Activated CD8-positive, alpha-beta T cell treated with anti-CD3 and anti-CD28 coated beads for 36 hours (primary cell): ENCODE measurements at regions of chr3 and their contacts with region 1.

Region 1: DNA sequence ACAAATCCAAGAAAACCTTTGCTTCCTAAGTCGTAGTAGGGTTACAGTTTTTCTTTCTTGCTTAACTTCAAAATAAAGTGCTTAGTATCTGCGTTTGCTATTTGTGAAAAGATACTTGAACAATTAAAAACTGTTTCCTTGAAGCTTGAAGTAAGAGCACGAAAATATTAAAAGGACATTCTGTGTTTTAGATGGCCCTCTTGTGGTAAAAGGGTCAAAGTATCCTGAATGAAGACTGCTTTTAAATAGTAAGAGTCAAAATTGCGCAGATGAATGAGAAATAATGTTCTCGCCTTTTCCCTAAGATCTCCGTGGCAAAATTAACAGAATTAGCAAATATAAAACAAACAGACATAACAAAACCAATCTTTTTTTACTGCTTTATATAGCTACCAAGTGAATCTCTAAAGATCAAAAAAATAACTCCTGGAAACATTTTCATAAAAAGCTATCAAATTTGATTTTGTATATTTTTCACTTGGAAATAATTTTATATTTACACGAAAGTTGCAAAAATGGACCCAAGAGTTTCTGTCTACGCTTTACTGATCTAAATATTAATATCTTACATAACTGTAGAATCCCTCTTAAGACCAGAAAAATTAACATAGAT is 175.4 kb downstream of the MBNL1 start:
- DNase-seq: no peak
- ATAC-seq: peak; percentile 41
- H3K4me3 Mint-ChIP-seq: no peak overlapping the region
- H3K27ac Mint-ChIP-seq: peak overlapping the region; percentile 43
- H3K4me1 Mint-ChIP-seq: peaks cover 69% of the 10 kb centered on the region
- H3K27me3 Mint-ChIP-seq: no peaks in the 10 kb centered on the region
- CTCF ChIP-seq: peak; percentile 70

Region 2: GRCh38 chr3:152183473-152183872 is 260.7 kb before region 1 on chr3:
- CTCF ChIA-PET with region 1: interaction called, 34 read pairs
- POLR2A ChIA-PET with region 1: no interaction called
- intact Hi-C with region 1: loop called (anchors 5 kb)
- DNase-seq: peak; percentile 82
- ATAC-seq: peak; percentile 91
- H3K4me3 Mint-ChIP-seq: peak overlapping the region; percentile 32
- H3K27ac Mint-ChIP-seq: peak overlapping the region; percentile 72
- H3K4me1 Mint-ChIP-seq: peaks cover 57% of the 10 kb centered on the region
- H3K27me3 Mint-ChIP-seq: no peaks in the 10 kb centered on the region
- CTCF ChIP-seq: peak; percentile 71

Region 3: GRCh38 chr3:152298393-152299242 is 145.5 kb before region 1 on chr3:
- CTCF ChIA-PET with region 1: interaction called, 3 read pairs
- POLR2A ChIA-PET with region 1: interaction called, 3 read pairs
- intact Hi-C with region 1: loop called (anchors 10 kb)
- DNase-seq: peak; percentile 80
- ATAC-seq: peak; percentile 87
- H3K4me3 Mint-ChIP-seq: peak overlapping the region; percentile 73
- H3K27ac Mint-ChIP-seq: peak overlapping the region; percentile 96
- H3K4me1 Mint-ChIP-seq: peaks cover 74% of the 10 kb centered on the region
- H3K27me3 Mint-ChIP-seq: no peaks in the 10 kb centered on the region
- CTCF ChIP-seq: no peak

Region 4: DNA sequence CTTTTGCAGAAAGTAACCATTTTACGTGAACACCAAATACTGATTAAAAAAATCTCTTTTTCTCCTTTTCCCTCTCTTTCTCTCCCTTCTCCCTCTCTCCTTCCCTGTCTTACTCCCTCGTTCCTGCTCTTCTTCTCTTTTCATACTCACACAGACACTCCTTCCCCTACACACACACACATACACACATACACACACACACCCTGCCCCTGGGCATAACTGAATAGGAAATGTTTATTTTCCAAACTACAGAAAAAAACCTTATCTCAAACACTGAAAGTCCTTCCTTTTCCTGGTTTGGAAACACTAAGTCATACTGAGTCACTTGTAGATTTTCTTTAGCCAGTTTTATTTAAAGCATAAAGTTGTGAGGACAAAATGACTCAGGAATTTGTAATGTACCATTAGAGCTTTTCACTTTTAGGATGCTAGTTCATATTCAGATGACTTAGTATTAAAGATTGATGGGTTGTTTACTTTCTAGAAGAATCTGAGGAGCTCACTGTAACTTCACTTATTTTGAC is 113.1 kb before region 1 on chr3:
- CTCF ChIA-PET with region 1: interaction called, 10 read pairs
- POLR2A ChIA-PET with region 1: interaction called, 3 read pairs
- intact Hi-C with region 1: no loop called
- DNase-seq: no peak
- ATAC-seq: peak; percentile 37
- H3K4me3 Mint-ChIP-seq: peak overlapping the region; percentile 31
- H3K27ac Mint-ChIP-seq: peak overlapping the region; percentile 87
- H3K4me1 Mint-ChIP-seq: peaks cover 88% of the 10 kb centered on the region
- H3K27me3 Mint-ChIP-seq: no peaks in the 10 kb centered on the region
- CTCF ChIP-seq: no peak

Region 5: GRCh38 chr3:152374262-152374990 is 69.7 kb before region 1 on chr3:
- CTCF ChIA-PET with region 1: interaction called, 15 read pairs
- POLR2A ChIA-PET with region 1: no interaction called
- intact Hi-C with region 1: no loop called
- DNase-seq: no peak
- ATAC-seq: no peak
- H3K4me3 Mint-ChIP-seq: no peak overlapping the region
- H3K27ac Mint-ChIP-seq: peak overlapping the region; percentile 44
- H3K4me1 Mint-ChIP-seq: peaks cover 82% of the 10 kb centered on the region
- H3K27me3 Mint-ChIP-seq: no peaks in the 10 kb centered on the region
- CTCF ChIP-seq: no peak

Region 6: GRCh38 chr3:152458376-152459117 is 14.4 kb after region 1 on chr3:
- CTCF ChIA-PET with region 1: interaction called, 11 read pairs
- POLR2A ChIA-PET with region 1: no interaction called
- intact Hi-C with region 1: no loop called
- DNase-seq: peak; percentile 69
- ATAC-seq: peak; percentile 59
- H3K4me3 Mint-ChIP-seq: no peak overlapping the region
- H3K27ac Mint-ChIP-seq: peak overlapping the region; percentile 80
- H3K4me1 Mint-ChIP-seq: peaks cover 46% of the 10 kb centered on the region
- H3K27me3 Mint-ChIP-seq: no peaks in the 10 kb centered on the region
- CTCF ChIP-seq: no peak

Region 7: GRCh38 chr3:152466784-152467183 is 22.6 kb after region 1 on chr3:
- CTCF ChIA-PET with region 1: interaction called, 10 read pairs
- POLR2A ChIA-PET with region 1: no interaction called
- intact Hi-C with region 1: no loop called
- DNase-seq: no peak
- ATAC-seq: peak; percentile 64
- H3K4me3 Mint-ChIP-seq: no peak overlapping the region
- H3K27ac Mint-ChIP-seq: peak overlapping the region; percentile 49
- H3K4me1 Mint-ChIP-seq: peaks cover 4% of the 10 kb centered on the region
- H3K27me3 Mint-ChIP-seq: no peaks in the 10 kb centered on the region
- CTCF ChIP-seq: peak; percentile 43

Region 8: GRCh38 chr3:152524198-152525140 is 80.3 kb after region 1 on chr3:
- CTCF ChIA-PET with region 1: no interaction called
- POLR2A ChIA-PET with region 1: no interaction called
- intact Hi-C with region 1: no loop called
- DNase-seq: peak; percentile 72
- ATAC-seq: peak; percentile 60
- H3K4me3 Mint-ChIP-seq: no peak overlapping the region
- H3K27ac Mint-ChIP-seq: no peak overlapping the region
- H3K4me1 Mint-ChIP-seq: no peaks in the 10 kb centered on the region
- H3K27me3 Mint-ChIP-seq: no peaks in the 10 kb centered on the region
- CTCF ChIP-seq: peak; percentile 88

Region 9: DNA sequence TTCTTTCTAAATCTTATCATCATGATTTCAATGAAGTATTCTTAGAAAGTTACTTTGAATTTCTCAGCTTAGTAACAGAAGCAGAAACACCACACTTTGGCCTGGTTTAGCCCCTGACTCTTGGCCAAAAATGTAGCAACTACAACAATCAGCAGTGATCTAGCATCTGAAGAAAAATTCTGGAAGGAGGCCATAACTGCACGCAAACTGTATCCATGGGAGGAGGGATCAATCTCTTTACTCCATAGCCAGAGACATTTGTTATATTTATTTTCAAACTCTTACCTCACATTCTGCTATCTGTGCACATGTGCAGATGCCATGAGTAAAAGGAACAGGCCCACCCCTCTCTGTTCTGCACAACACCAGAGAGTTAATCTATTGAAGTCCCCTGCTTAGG is 139.8 kb after region 1 on chr3:
- CTCF ChIA-PET with region 1: no interaction called
- POLR2A ChIA-PET with region 1: no interaction called
- intact Hi-C with region 1: no loop called
- DNase-seq: no peak
- ATAC-seq: no peak
- H3K4me3 Mint-ChIP-seq: no peak overlapping the region
- H3K27ac Mint-ChIP-seq: no peak overlapping the region
- H3K4me1 Mint-ChIP-seq: no peaks in the 10 kb centered on the region
- H3K27me3 Mint-ChIP-seq: peaks cover 2% of the 10 kb centered on the region
- CTCF ChIP-seq: no peak

Region 10: DNA sequence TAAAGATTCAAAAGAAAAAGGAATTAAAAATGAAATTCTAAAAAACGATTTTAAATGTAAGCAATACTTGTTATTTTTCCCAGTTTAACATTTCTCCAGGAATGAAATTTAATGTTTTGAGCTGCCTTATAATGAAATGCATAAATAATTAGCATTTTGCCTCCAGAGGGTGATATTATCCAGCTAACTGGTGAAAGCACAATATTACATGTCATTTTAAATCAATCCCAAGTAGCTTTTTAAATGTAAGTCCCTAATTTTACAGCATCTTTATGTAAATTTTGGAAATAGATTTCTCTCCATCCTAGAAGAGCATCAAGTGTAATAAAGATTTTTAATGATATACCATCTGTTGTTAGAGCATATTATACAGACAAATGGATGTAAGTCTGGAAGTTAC is 251.7 kb after region 1 on chr3:
- CTCF ChIA-PET with region 1: no interaction called
- POLR2A ChIA-PET with region 1: no interaction called
- intact Hi-C with region 1: no loop called
- DNase-seq: no peak
- ATAC-seq: no peak
- H3K4me3 Mint-ChIP-seq: no peak overlapping the region
- H3K27ac Mint-ChIP-seq: no peak overlapping the region
- H3K4me1 Mint-ChIP-seq: no peaks in the 10 kb centered on the region
- H3K27me3 Mint-ChIP-seq: no peaks in the 10 kb centered on the region
- CTCF ChIP-seq: no peak